MCF 10A (cell line): ENCODE measurements at regions of chr10 and their contacts with region 1.

Region 1: DNA sequence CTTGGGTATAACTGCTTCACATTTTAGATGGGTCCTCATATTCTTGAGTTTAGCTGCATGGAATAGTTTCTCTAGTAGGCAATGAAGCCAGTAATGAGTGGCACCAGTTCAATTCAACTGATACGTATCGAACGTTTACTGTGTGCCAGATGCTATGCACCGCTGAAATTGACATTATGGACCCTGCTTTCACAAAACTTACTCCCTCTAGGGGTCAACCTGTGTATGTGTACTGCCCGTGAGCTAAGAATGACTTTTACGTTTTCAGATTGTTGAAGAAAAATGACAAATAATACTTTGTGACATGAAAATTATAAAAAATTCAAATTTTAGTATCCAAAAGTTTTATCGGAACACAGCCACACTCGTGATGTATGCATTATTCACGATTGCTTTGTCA is 95.5 kb downstream of the ZMYND11 start:
- DNase-seq: no peak
- H3K4me3 Mint-ChIP-seq: no peak overlapping the region
- H3K27ac Mint-ChIP-seq: no peak overlapping the region
- H3K4me1 Mint-ChIP-seq: peaks cover 6% of the 10 kb centered on the region
- H3K27me3 Mint-ChIP-seq: no peaks in the 10 kb centered on the region
- CTCF ChIP-seq: peak; percentile 23

Region 2: GRCh38 chr10:241451-241850 is 10.7 kb after region 1 on chr10:
- CTCF ChIA-PET with region 1: no interaction called
- POLR2A ChIA-PET with region 1: no interaction called
- intact Hi-C with region 1: no loop called
- DNase-seq: no peak
- H3K4me3 Mint-ChIP-seq: no peak overlapping the region
- H3K27ac Mint-ChIP-seq: no peak overlapping the region
- H3K4me1 Mint-ChIP-seq: no peaks in the 10 kb centered on the region
- H3K27me3 Mint-ChIP-seq: no peaks in the 10 kb centered on the region
- CTCF ChIP-seq: no peak

Region 3: GRCh38 chr10:480928-481552 is 250.3 kb after region 1 on chr10:
- CTCF ChIA-PET with region 1: no interaction called
- POLR2A ChIA-PET with region 1: no interaction called
- intact Hi-C with region 1: no loop called
- DNase-seq: no peak
- H3K4me3 Mint-ChIP-seq: no peak overlapping the region
- H3K27ac Mint-ChIP-seq: no peak overlapping the region
- H3K4me1 Mint-ChIP-seq: no peaks in the 10 kb centered on the region
- H3K27me3 Mint-ChIP-seq: peaks cover 15% of the 10 kb centered on the region
- CTCF ChIP-seq: no peak

Region 4: DNA sequence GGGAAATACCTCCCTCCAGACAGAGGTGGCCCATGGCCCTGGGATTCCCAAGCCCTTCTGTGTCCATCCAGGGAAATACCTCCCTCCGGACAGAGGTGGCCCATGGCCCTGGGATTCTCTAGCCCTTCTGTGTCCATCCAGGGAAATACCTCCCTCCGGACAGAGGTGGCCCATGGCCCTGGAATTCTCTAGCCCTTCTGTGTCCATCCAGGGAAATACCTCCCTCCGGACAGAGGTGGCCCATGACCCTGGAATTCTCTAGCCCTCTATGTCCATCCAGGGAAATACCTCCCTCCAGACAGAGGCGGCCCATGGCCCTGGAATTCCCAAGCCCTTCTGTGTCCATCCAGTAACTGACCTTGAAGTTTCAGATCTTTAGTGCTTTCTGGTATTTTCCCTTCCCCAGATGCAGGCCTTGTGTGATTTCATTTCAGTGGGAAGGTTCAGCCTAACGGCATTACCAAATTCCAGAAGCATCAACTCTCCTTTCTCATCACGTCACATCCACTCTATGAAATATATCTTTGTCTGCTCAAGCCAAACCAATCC is 487.5 kb after region 1 on chr10:
- CTCF ChIA-PET with region 1: no interaction called
- POLR2A ChIA-PET with region 1: no interaction called
- intact Hi-C with region 1: no loop called
- DNase-seq: peak; percentile 11
- H3K4me3 Mint-ChIP-seq: no peak overlapping the region
- H3K27ac Mint-ChIP-seq: no peak overlapping the region
- H3K4me1 Mint-ChIP-seq: no peaks in the 10 kb centered on the region
- H3K27me3 Mint-ChIP-seq: peaks cover 32% of the 10 kb centered on the region
- CTCF ChIP-seq: no peak

Region 5: GRCh38 chr10:784403-785088 is 553.8 kb after region 1 on chr10:
- CTCF ChIA-PET with region 1: no interaction called
- POLR2A ChIA-PET with region 1: no interaction called
- intact Hi-C with region 1: loop called (anchors 10 kb)
- DNase-seq: peak; percentile 60
- H3K4me3 Mint-ChIP-seq: peak overlapping the region; percentile 21
- H3K27ac Mint-ChIP-seq: no peak overlapping the region
- H3K4me1 Mint-ChIP-seq: no peaks in the 10 kb centered on the region
- H3K27me3 Mint-ChIP-seq: no peaks in the 10 kb centered on the region
- CTCF ChIP-seq: peak; percentile 6

Region 6: GRCh38 chr10:1033601-1034000 is 802.9 kb after region 1 on chr10:
- CTCF ChIA-PET with region 1: no interaction called
- POLR2A ChIA-PET with region 1: no interaction called
- intact Hi-C with region 1: no loop called
- DNase-seq: no peak
- H3K4me3 Mint-ChIP-seq: no peak overlapping the region
- H3K27ac Mint-ChIP-seq: no peak overlapping the region
- H3K4me1 Mint-ChIP-seq: peaks cover 19% of the 10 kb centered on the region
- H3K27me3 Mint-ChIP-seq: no peaks in the 10 kb centered on the region
- CTCF ChIP-seq: no peak